WTC11 (cell line): ENCODE measurements at regions of chr9 and their contacts with region 1.

Region 1: GRCh38 chr9:121929893-121930875 is 162.9 kb downstream of the TTLL11 start:
- DNase-seq: peak; percentile 79
- ATAC-seq: peak; percentile 97
- H3K4me3 Mint-ChIP-seq: no peak overlapping the region
- H3K27ac Mint-ChIP-seq: no peak overlapping the region
- H3K4me1 Mint-ChIP-seq: peaks cover 5% of the 10 kb centered on the region
- H3K27me3 Mint-ChIP-seq: no peaks in the 10 kb centered on the region; the same call in 1 of the 2 replicates
- CTCF ChIP-seq: peak; percentile 32

Region 2: DNA sequence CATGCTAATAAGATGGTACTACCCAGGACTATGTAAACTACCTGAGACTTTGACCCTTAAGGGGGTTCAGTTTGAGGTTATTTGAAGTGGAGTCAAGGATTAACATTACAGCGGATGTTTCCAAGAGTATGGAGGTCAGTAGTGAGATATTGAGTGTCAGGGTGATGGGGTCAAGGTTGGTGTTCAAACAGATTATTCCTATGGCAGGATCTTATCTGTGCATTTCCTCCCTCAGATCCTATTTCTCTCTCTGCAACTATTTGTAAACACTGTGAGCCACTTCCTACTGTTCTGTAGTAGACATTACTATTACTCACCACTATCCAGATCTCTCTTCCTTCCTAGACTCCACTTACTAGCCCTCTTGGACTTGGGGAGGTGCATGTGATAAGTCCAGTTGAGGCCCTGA is 506.2 kb before region 1 on chr9:
- CTCF ChIA-PET with region 1: no interaction called
- POLR2A ChIA-PET with region 1: no interaction called
- DNase-seq: no peak
- ATAC-seq: no peak
- H3K4me3 Mint-ChIP-seq: no peak overlapping the region
- H3K27ac Mint-ChIP-seq: no peak overlapping the region
- H3K4me1 Mint-ChIP-seq: peaks cover 3% of the 10 kb centered on the region
- H3K27me3 Mint-ChIP-seq: peaks cover 3% of the 10 kb centered on the region
- CTCF ChIP-seq: no peak

Region 3: GRCh38 chr9:121621113-121621449 is 309.1 kb before region 1 on chr9:
- CTCF ChIA-PET with region 1: interaction called, 12 read pairs
- POLR2A ChIA-PET with region 1: no interaction called
- DNase-seq: peak; percentile 74
- ATAC-seq: peak; percentile 97
- H3K4me3 Mint-ChIP-seq: no peak overlapping the region
- H3K27ac Mint-ChIP-seq: peak overlapping the region; percentile 32
- H3K4me1 Mint-ChIP-seq: peaks cover 20% of the 10 kb centered on the region
- H3K27me3 Mint-ChIP-seq: no peaks in the 10 kb centered on the region
- CTCF ChIP-seq: no peak

Region 4: GRCh38 chr9:121698627-121699570 is 231.3 kb before region 1 on chr9:
- CTCF ChIA-PET with region 1: interaction called, 18 read pairs
- POLR2A ChIA-PET with region 1: no interaction called
- DNase-seq: peak; percentile 77
- ATAC-seq: peak; percentile 66
- H3K4me3 Mint-ChIP-seq: peak overlapping the region; percentile 56
- H3K27ac Mint-ChIP-seq: no peak overlapping the region
- H3K4me1 Mint-ChIP-seq: peaks cover 35% of the 10 kb centered on the region
- H3K27me3 Mint-ChIP-seq: peaks cover 3% of the 10 kb centered on the region; the same call in 1 of the 2 replicates
- CTCF ChIP-seq: no peak

Region 5: GRCh38 chr9:121783521-121784507 is 146.4 kb before region 1 on chr9:
- CTCF ChIA-PET with region 1: interaction called, 16 read pairs
- POLR2A ChIA-PET with region 1: no interaction called
- DNase-seq: peak; percentile 58
- ATAC-seq: peak; percentile 53
- H3K4me3 Mint-ChIP-seq: no peak overlapping the region
- H3K27ac Mint-ChIP-seq: peak overlapping the region; percentile 97
- H3K4me1 Mint-ChIP-seq: peaks cover 43% of the 10 kb centered on the region
- H3K27me3 Mint-ChIP-seq: no peaks in the 10 kb centered on the region
- CTCF ChIP-seq: no peak

Region 6: GRCh38 chr9:121888438-121888775 is 41.8 kb before region 1 on chr9:
- CTCF ChIA-PET with region 1: interaction called, 11 read pairs
- POLR2A ChIA-PET with region 1: no interaction called
- DNase-seq: no peak
- ATAC-seq: no peak
- H3K4me3 Mint-ChIP-seq: no peak overlapping the region
- H3K27ac Mint-ChIP-seq: no peak overlapping the region
- H3K4me1 Mint-ChIP-seq: peaks cover 30% of the 10 kb centered on the region
- H3K27me3 Mint-ChIP-seq: no peaks in the 10 kb centered on the region
- CTCF ChIP-seq: no peak

Region 7: DNA sequence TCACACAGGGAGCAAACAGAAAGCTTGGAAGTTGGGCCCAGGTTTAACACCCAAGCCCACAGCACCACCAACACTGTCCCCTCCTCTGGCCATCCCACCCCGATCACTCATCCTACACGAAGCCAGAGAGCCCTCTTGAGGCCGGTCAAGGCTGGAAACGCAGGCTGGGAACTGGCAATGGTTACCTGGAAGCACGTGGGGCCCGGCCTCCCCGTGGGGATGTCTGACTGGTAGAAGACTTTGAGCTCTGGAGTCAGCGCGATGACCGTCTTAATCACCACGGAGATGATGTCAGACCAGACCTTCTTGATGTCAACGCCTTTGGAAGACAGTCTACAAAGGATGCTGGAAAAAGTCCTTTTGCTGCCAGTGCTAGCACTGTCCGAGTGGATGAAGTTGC is 58.8 kb after region 1 on chr9:
- CTCF ChIA-PET with region 1: interaction called, 14 read pairs
- POLR2A ChIA-PET with region 1: no interaction called
- DNase-seq: peak; percentile 76
- ATAC-seq: peak; percentile 94
- H3K4me3 Mint-ChIP-seq: no peak overlapping the region
- H3K27ac Mint-ChIP-seq: no peak overlapping the region
- H3K4me1 Mint-ChIP-seq: no peaks in the 10 kb centered on the region
- H3K27me3 Mint-ChIP-seq: peaks cover 17% of the 10 kb centered on the region
- CTCF ChIP-seq: no peak